T-cell (primary cell): ENCODE measurements at regions of chr18 and their contacts with region 1.

Region 1: DNA sequence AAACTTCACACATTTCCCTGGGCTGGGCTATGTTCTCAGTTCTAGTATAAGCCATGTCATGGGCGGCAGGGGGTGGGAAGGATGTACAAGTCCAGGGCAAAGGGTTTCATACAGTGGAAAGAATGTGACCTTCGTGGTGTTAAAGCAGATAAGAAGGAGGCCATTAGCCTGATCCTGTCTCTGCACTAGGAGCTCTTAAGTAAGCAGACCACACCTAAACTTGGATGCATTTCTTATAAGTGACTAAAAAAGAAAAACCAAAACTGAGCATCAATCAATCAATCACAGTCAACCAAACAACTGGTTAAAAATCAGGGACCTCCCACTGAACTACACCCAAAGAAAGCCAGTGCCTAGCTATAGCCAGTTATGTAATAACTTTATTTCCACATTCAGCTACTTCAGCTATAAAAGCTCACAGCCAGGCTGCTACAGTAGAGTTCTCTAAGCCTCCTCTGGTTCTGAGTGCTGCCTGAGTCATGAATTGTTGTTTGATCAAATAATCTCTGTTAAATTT is 46.8 kb upstream of the RIOK3 start:
- DNase-seq: no peak
- ATAC-seq: no peak
- H3K4me3 ChIP-seq: no peak overlapping the region
- H3K4me3 Mint-ChIP-seq: no peak overlapping the region
- H3K27ac ChIP-seq: no peak overlapping the region
- H3K27ac Mint-ChIP-seq: no peak overlapping the region
- H3K4me1 ChIP-seq: no peaks in the 10 kb centered on the region
- H3K4me1 Mint-ChIP-seq: no peaks in the 10 kb centered on the region
- H3K27me3 ChIP-seq: no peaks in the 10 kb centered on the region
- H3K27me3 Mint-ChIP-seq: no peaks in the 10 kb centered on the region

Region 2: GRCh38 chr18:22710628-22711380 is 695.5 kb before region 1 on chr18:
- CTCF ChIA-PET with region 1: no interaction called
- POLR2A ChIA-PET with region 1: no interaction called
- DNase-seq: no peak
- ATAC-seq: no peak
- H3K4me3 ChIP-seq: no peak overlapping the region
- H3K4me3 Mint-ChIP-seq: no peak overlapping the region
- H3K27ac ChIP-seq: no peak overlapping the region
- H3K27ac Mint-ChIP-seq: no peak overlapping the region
- H3K4me1 ChIP-seq: no peaks in the 10 kb centered on the region
- H3K4me1 Mint-ChIP-seq: no peaks in the 10 kb centered on the region
- H3K27me3 ChIP-seq: no peaks in the 10 kb centered on the region
- H3K27me3 Mint-ChIP-seq: peaks cover 2 to 12% of the 10 kb centered on the region in 2 donors

Region 3: GRCh38 chr18:24011123-24011917 is 605.0 kb after region 1 on chr18:
- CTCF ChIA-PET with region 1: interaction called in 1 of 2 experiments, 14 read pairs
- POLR2A ChIA-PET with region 1: no interaction called
- DNase-seq: peak in 6 of 35 experiments; percentile 21 to 73 (median 34)
- ATAC-seq: peak; percentile 10 to 46 (median 19)
- H3K4me3 ChIP-seq: peak overlapping the region; percentile 7 to 47
- H3K4me3 Mint-ChIP-seq: peak overlapping the region; percentile 65 to 79 (median 68)
- H3K27ac ChIP-seq: peak overlapping the region; percentile 85
- H3K27ac Mint-ChIP-seq: peak overlapping the region; percentile 97 to 99
- H3K4me1 ChIP-seq: peaks cover 66 to 68% of the 10 kb centered on the region in 2 experiments
- H3K4me1 Mint-ChIP-seq: peaks cover 65 to 77% (median 68%) of the 10 kb centered on the region in 3 donors
- H3K27me3 ChIP-seq: no peaks in the 10 kb centered on the region
- H3K27me3 Mint-ChIP-seq: no peaks in the 10 kb centered on the region